ENCODE measurements at regions of chr10 and their contacts with region 1.

Region 1: DNA sequence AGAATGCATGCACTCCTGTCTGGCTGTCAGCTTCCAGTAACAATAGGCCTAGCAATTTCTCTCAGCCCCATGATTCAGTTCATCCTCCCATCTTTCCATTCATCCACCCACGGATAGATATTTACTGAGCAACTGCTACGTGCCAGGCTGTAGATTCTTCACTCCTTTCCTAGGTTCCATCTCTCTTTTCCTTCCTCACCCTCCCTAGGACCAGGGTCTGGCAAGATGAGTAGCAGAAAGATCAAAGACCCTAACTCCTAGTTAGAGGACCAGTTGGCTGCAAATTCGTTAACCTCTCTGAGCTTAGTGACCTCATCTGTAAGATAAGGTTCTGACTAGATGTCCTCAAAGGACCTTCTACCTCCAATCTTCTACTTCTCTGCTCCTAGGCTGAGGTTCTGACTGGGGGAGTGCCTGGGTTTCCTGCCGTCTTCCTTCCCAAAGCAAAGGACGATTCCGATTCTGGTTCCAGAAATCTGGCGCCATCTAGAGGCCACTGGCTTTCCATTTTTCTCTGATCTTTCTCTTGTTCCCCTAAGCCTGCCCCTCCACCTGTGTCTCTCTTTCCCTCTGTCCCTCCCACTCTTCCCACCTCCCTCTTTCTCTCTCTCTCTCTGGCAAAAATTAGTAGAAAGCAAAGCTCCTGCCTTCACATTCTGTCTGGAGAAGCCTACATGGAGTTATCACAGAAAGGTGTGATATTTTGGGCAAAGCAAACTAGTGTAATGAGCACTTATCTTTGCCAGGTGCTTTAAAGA is 26.2 kb downstream of the TBATA start:
- DNase-seq: peak; percentile 66 to 77 (median 72)
- H3K4me3 ChIP-seq: no peak overlapping the region
- H3K27ac ChIP-seq: no peak overlapping the region
- H3K4me1 ChIP-seq: peaks cover 0 to 21% (median 7%) of the 10 kb centered on the region in 4 experiments
- H3K27me3 ChIP-seq: no peaks in the 10 kb centered on the region

Region 2: DNA sequence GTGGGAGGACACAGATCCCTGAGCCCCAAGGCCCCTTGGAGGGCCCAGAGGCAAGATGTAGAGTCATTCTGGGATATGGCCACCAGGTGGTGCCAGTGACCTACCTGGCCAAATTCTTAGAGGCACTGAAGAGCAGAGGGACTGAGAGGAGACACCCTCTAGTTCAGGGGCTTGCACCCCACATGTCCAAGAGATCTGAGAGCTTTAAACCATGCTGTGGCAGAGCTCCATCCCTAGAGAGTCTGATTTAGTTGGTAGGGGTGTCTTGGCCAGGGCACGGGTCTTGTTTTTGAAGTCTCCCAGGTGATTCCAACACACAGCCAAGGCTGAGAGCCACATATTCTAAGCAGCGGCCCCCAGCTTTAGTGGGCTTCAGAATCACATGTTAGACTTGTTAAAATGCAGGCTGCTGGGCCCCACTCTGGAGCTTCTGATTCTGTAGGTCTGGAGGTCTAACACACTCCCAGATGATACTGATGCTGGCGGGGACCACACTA is 208.9 kb before region 1 on chr10:
- CTCF ChIA-PET with region 1: interaction called, 93 read pairs
- POLR2A ChIA-PET with region 1: no interaction called
- DNase-seq: peak; percentile 63 to 84 (median 75)
- H3K4me3 ChIP-seq: no peak overlapping the region
- H3K27ac ChIP-seq: no peak overlapping the region
- H3K4me1 ChIP-seq: no peaks in the 10 kb centered on the region
- H3K27me3 ChIP-seq: no peaks in the 10 kb centered on the region

Region 3: GRCh38 chr10:70558871-70559810 is 199.8 kb before region 1 on chr10:
- CTCF ChIA-PET with region 1: interaction called, 69 read pairs
- POLR2A ChIA-PET with region 1: interaction called, 3 read pairs
- DNase-seq: peak; percentile 78 to 85 (median 85)
- H3K4me3 ChIP-seq: peak overlapping the region in 5 of 7 experiments; percentile 30 to 79 (median 59)
- H3K27ac ChIP-seq: peak overlapping the region in 1 of 2 experiments; percentile 67
- H3K4me1 ChIP-seq: peaks cover 0 to 50% (median 13%) of the 10 kb centered on the region in 4 experiments
- H3K27me3 ChIP-seq: no peaks in the 10 kb centered on the region

Region 4: DNA sequence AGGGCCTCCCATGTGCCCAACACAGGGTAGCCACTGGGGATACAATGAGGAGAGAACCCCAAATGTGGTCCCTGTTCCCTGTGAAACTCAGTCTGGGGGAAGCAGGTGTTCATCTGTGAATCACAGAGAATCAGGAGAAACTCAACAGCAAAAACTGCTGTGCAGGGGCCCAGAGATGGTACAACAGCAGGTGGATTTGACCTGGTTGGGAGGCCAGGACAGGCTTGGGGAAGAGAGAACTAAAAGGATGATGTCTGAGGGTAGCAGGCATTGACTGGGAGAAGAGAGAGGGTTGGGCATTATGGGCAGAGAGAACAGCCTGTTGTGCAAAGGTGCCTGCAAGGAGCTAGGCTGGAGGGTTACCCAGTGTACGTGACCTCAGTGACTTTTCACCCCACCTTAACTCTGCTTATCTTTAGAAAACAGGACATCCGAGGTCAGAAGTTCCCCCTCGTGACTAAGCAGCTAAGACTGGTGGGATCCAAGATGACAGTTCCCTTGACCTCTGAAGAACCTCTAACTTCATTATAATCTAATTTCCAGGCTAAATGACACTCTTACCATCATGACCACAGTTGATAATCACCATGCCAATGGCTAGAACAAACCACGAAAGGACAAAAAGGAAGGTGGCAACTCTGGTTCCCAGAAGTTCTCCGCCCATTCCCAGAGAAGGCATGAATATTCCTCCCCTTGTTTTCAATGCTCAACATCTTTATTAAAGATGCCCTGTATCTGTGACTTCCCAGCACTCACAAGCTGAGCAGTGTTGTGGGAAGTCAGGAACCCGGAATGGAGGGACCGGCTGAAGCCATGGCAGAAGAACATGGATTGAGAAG is 91.8 kb before region 1 on chr10:
- CTCF ChIA-PET with region 1: no interaction called
- POLR2A ChIA-PET with region 1: no interaction called
- DNase-seq: peak; percentile 86 to 96 (median 95)
- H3K4me3 ChIP-seq: peak overlapping the region in 1 of 7 experiments; percentile 33
- H3K27ac ChIP-seq: peak overlapping the region; percentile 17 to 77
- H3K4me1 ChIP-seq: peaks cover 0 to 34% (median 22%) of the 10 kb centered on the region in 4 experiments
- H3K27me3 ChIP-seq: peaks cover 0 to 10% (median 0%) of the 10 kb centered on the region in 5 experiments

Region 5: DNA sequence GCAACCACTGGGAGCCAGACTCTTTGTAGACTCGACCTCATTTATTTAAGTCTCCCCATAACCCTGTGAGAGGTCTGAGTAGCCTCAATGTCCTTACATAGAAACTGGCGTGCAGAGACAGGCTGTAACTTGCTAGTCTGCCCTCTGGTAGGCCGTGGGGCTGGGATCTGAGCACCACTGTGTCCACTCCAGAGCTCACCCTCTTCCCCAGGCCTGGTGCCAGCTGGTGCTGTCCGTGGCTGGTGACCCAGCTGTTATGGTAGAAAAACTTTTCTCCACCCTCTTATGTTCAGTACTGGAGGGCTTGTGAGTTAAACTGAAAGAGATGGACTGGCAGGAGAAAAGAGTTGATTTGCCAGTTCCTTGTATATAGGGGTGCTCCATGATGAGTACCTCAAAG is 44.7 kb before region 1 on chr10:
- CTCF ChIA-PET with region 1: no interaction called
- POLR2A ChIA-PET with region 1: no interaction called
- DNase-seq: no peak
- H3K4me3 ChIP-seq: no peak overlapping the region
- H3K27ac ChIP-seq: no peak overlapping the region
- H3K4me1 ChIP-seq: peaks cover 0 to 11% (median 0%) of the 10 kb centered on the region in 4 experiments
- H3K27me3 ChIP-seq: no peaks in the 10 kb centered on the region

Region 6: GRCh38 chr10:70742537-70743429 is 16.2 kb before region 1 on chr10:
- CTCF ChIA-PET with region 1: interaction called, 12 read pairs
- POLR2A ChIA-PET with region 1: no interaction called
- DNase-seq: peak; percentile 20 to 51 (median 49)
- H3K4me3 ChIP-seq: peak overlapping the region in 2 of 7 experiments; percentile 40 to 46
- H3K27ac ChIP-seq: peak overlapping the region in 1 of 2 experiments; percentile 70
- H3K4me1 ChIP-seq: peaks cover 0 to 54% (median 24%) of the 10 kb centered on the region in 4 experiments
- H3K27me3 ChIP-seq: no peaks in the 10 kb centered on the region

Region 7: GRCh38 chr10:70782086-70782745 is 23.3 kb after region 1 on chr10:
- CTCF ChIA-PET with region 1: interaction called, 11 read pairs
- POLR2A ChIA-PET with region 1: no interaction called
- DNase-seq: no peak
- H3K4me3 ChIP-seq: no peak overlapping the region
- H3K27ac ChIP-seq: no peak overlapping the region
- H3K4me1 ChIP-seq: peaks cover 5 to 51% (median 43%) of the 10 kb centered on the region in 4 experiments
- H3K27me3 ChIP-seq: no peaks in the 10 kb centered on the region

Region 8: DNA sequence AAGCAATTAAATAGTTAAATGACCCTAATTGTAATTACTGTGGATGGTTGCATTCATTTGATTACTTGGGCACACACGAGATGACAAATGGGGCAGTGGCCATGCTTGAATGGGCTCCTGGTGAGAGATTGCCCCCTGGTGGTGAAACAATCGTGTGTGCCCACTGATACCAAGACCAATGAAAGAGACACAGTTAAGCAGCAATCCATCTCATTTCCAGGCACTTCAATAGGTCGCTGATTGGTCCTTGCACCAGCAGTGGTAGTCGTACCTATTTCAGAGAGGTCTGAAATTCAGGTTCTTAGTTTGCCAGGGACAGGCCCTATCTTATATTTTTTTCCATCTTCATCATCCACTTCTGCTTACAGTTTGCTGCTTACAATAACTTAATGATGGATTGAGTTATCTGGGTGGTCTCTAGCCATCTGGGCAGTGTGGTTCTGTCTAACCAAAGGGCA is 121.2 kb after region 1 on chr10:
- CTCF ChIA-PET with region 1: interaction called, 11 read pairs
- POLR2A ChIA-PET with region 1: no interaction called
- DNase-seq: peak; percentile 82 to 91 (median 86)
- H3K4me3 ChIP-seq: no peak overlapping the region
- H3K27ac ChIP-seq: no peak overlapping the region
- H3K4me1 ChIP-seq: no peaks in the 10 kb centered on the region
- H3K27me3 ChIP-seq: no peaks in the 10 kb centered on the region

Measured in common myeloid progenitor, CD34-positive (primary cell).